CD4-positive, alpha-beta memory T cell (primary cell): ENCODE measurements at regions of chr11 and their contacts with region 1.

Region 1: DNA sequence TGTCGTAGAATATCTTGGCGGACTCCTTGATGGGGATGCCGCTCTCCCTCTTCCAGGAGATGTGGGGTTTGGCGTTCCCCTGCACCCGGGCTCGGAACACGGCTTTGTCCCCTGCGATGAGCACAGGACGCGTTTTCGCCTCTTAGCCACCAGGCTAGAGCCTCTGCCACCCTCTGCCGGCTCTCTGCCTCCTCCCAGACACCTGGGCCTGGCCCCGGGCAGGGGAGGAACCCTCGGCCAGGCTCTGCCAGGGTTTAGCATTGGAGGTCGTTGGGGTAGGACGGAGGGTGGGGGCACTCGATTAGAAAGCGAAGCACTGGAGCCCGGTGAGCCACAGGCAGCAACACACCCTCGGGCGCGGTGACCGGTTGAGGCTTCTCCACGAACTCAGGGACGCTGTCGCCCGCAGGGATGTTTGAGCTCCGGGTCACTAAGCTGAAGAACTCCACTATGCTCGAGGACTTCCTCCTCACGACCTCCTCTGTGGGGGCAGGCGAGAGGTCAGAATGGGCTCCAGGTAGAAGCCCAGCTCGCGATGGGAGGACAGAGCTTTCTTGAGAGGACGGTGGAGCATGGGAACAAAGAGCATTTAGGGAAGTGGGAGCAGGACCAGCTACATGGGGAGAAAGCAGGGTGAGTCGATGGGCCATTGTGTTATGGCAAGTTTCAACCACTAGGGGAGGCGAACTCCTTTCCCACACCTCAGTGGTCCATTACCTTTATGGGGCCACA is 4.3 kb downstream of the IGSF22 start:
- DNase-seq: peak; percentile 36 to 60 (median 53)
- H3K4me3 ChIP-seq: peak overlapping the region; percentile 77 to 81
- H3K4me3 Mint-ChIP-seq: peak overlapping the region; percentile 87 to 96 (median 92)
- H3K27ac ChIP-seq: peak overlapping the region; percentile 56
- H3K27ac Mint-ChIP-seq: peak overlapping the region; percentile 47 to 92 (median 81)
- H3K4me1 ChIP-seq: peaks cover 5% of the 10 kb centered on the region
- H3K4me1 Mint-ChIP-seq: peaks cover 4 to 13% (median 7%) of the 10 kb centered on the region in 4 donors
- H3K27me3 ChIP-seq: no peaks in the 10 kb centered on the region
- H3K27me3 Mint-ChIP-seq: no peaks in the 10 kb centered on the region

Region 2: DNA sequence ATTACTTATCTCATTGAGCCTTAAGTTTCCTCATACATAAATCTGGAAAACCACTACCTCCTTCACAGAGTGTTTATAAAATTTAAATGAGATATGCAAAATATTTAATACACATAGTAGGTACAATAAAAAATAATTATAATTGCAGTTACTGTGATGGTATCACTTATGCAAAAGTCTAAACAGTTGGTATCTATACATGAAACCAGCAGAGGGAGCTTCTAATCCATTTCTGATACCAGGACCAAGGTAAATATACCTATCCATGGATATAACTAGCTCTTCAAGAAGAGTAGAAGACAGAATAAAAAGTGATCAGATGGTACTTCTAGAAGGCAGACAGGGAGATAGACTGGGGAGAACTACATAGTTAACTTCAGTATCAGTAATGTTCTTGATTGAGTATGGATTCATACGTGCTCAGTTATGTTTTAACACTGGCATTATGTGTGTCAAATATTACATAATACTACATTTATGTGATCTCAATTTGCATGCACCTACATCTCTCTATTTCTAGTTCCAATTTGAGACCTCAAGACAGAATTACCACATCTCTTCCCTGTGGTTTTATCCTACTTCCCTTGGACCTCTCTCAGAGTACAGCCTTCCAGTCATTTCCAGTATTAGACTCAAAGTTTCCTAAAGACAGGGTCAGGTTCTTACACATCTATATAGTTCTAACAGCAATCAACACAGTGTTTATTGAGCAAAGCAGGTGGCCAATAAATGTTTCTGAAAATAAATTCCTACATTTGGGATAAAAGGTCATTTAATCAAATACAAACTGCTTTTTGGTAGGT is 181.3 kb before region 1 on chr11:
- CTCF ChIA-PET with region 1: interaction called, 34 read pairs
- POLR2A ChIA-PET with region 1: interaction called, 7 read pairs
- intact Hi-C with region 1: no loop called
- DNase-seq: peak in 4 of 5 donors; percentile 46 to 58 (median 54)
- H3K4me3 ChIP-seq: no peak overlapping the region
- H3K4me3 Mint-ChIP-seq: no peak overlapping the region
- H3K27ac ChIP-seq: no peak overlapping the region
- H3K27ac Mint-ChIP-seq: peak overlapping the region in 5 of 7 donors; percentile 25 to 81 (median 33)
- H3K4me1 ChIP-seq: no peaks in the 10 kb centered on the region
- H3K4me1 Mint-ChIP-seq: peaks cover 0 to 7% (median 0%) of the 10 kb centered on the region in 4 donors
- H3K27me3 ChIP-seq: no peaks in the 10 kb centered on the region
- H3K27me3 Mint-ChIP-seq: no peaks in the 10 kb centered on the region

Region 3: GRCh38 chr11:18588297-18589252 is 133.2 kb before region 1 on chr11 and contains the start of gene UEVLD:
- CTCF ChIA-PET with region 1: interaction called, 3 read pairs
- POLR2A ChIA-PET with region 1: no interaction called
- intact Hi-C with region 1: loop called (anchors 2 kb)
- DNase-seq: peak; percentile 45 to 72 (median 48)
- H3K4me3 ChIP-seq: peak within 1 kb of the TSS; percentile 8 to 56
- H3K4me3 Mint-ChIP-seq: no peak within 1 kb of the TSS
- H3K27ac ChIP-seq: peak within 1 kb of the TSS; percentile 91
- H3K27ac Mint-ChIP-seq: no peak within 1 kb of the TSS
- H3K4me1 ChIP-seq: peaks cover 48% of the 10 kb centered on the region
- H3K4me1 Mint-ChIP-seq: peaks cover 0 to 13% (median 11%) of the 10 kb centered on the region in 4 donors
- H3K27me3 ChIP-seq: no peaks in the 10 kb centered on the region
- H3K27me3 Mint-ChIP-seq: no peaks in the 10 kb centered on the region
- total RNA-seq, gene UEVLD: 10.6 to 10.7 TPM

Region 4: GRCh38 chr11:18650859-18651557 is 70.7 kb before region 1 on chr11:
- CTCF ChIA-PET with region 1: interaction called, 17 read pairs
- POLR2A ChIA-PET with region 1: no interaction called
- intact Hi-C with region 1: no loop called
- DNase-seq: peak; percentile 57 to 64 (median 62)
- H3K4me3 ChIP-seq: no peak overlapping the region
- H3K4me3 Mint-ChIP-seq: peak overlapping the region in 4 of 8 donors; percentile 17 to 76 (median 48)
- H3K27ac ChIP-seq: no peak overlapping the region
- H3K27ac Mint-ChIP-seq: peak overlapping the region in 5 of 7 donors; percentile 59 to 90 (median 75)
- H3K4me1 ChIP-seq: no peaks in the 10 kb centered on the region
- H3K4me1 Mint-ChIP-seq: peaks cover 5 to 10% (median 8%) of the 10 kb centered on the region in 4 donors
- H3K27me3 ChIP-seq: no peaks in the 10 kb centered on the region
- H3K27me3 Mint-ChIP-seq: no peaks in the 10 kb centered on the region

Region 5: GRCh38 chr11:18706330-18707243 is 15.1 kb before region 1 on chr11:
- CTCF ChIA-PET with region 1: interaction called, 42 read pairs
- POLR2A ChIA-PET with region 1: interaction called, 19 read pairs
- intact Hi-C with region 1: loop called (anchors 1 kb)
- DNase-seq: peak; percentile 50 to 77 (median 61)
- H3K4me3 ChIP-seq: peak overlapping the region; percentile 53 to 60
- H3K4me3 Mint-ChIP-seq: peak overlapping the region; percentile 91 to 97 (median 95)
- H3K27ac ChIP-seq: peak overlapping the region; percentile 52
- H3K27ac Mint-ChIP-seq: peak overlapping the region; percentile 78 to 98 (median 96)
- H3K4me1 ChIP-seq: peaks cover 13% of the 10 kb centered on the region
- H3K4me1 Mint-ChIP-seq: peaks cover 13 to 30% (median 21%) of the 10 kb centered on the region in 4 donors
- H3K27me3 ChIP-seq: no peaks in the 10 kb centered on the region
- H3K27me3 Mint-ChIP-seq: no peaks in the 10 kb centered on the region